Naive thymus-derived CD4-positive, alpha-beta T cell (primary cell): ENCODE measurements at regions of chr20 and their contacts with region 1.

Region 1: GRCh38 chr20:47576516-47577033 is 74.9 kb downstream of the NCOA3 start:
- DNase-seq: no peak
- ATAC-seq: peak; percentile 61
- H3K4me3 ChIP-seq: no peak overlapping the region
- H3K4me3 Mint-ChIP-seq: peak overlapping the region; percentile 8 to 58 (median 36)
- H3K27ac ChIP-seq: no peak overlapping the region
- H3K27ac Mint-ChIP-seq: peak overlapping the region in 8 of 9 donors; percentile 6 to 67 (median 30)
- H3K4me1 ChIP-seq: peaks cover 23 to 32% of the 10 kb centered on the region in 2 donors
- H3K4me1 Mint-ChIP-seq: peaks cover 67 to 95% (median 90%) of the 10 kb centered on the region in 7 donors
- H3K27me3 ChIP-seq: no peaks in the 10 kb centered on the region
- H3K27me3 Mint-ChIP-seq: no peaks in the 10 kb centered on the region

Region 2: GRCh38 chr20:47411161-47411560 is 165.4 kb before region 1 on chr20:
- CTCF ChIA-PET with region 1: no interaction called
- POLR2A ChIA-PET with region 1: no interaction called
- intact Hi-C with region 1: no loop called
- DNase-seq: no peak
- ATAC-seq: no peak
- H3K4me3 ChIP-seq: no peak overlapping the region
- H3K4me3 Mint-ChIP-seq: peak overlapping the region in 1 of 10 donors; percentile 20
- H3K27ac ChIP-seq: no peak overlapping the region
- H3K27ac Mint-ChIP-seq: no peak overlapping the region
- H3K4me1 ChIP-seq: peaks cover 13 to 15% of the 10 kb centered on the region in 2 donors
- H3K4me1 Mint-ChIP-seq: peaks cover 10 to 26% (median 25%) of the 10 kb centered on the region in 7 donors
- H3K27me3 ChIP-seq: no peaks in the 10 kb centered on the region
- H3K27me3 Mint-ChIP-seq: no peaks in the 10 kb centered on the region

Region 3: DNA sequence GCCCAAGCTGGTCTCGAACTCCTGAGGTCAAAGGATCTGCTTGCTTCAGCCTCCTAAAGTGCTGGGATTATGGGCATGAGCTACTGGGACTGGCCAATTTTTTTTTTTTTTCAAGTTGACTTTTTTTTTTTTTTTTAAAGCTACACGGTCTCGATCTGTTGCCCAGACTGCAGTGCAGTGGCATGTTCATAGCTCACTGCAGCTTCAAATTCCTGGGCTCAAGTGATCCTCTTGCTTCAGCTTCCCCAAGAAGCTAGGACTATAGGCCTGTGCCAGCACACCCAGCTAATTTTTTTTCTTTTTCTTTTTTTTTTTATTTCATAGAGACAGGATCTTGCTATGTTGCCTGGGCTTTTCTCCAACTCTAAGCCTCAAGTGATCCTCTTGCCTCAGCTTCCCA is 15.4 kb before region 1 on chr20:
- CTCF ChIA-PET with region 1: interaction called, 4 read pairs
- POLR2A ChIA-PET with region 1: no interaction called
- intact Hi-C with region 1: loop called in 1 of 2 experiments (anchors 2 kb)
- DNase-seq: no peak
- ATAC-seq: no peak
- H3K4me3 ChIP-seq: no peak overlapping the region
- H3K4me3 Mint-ChIP-seq: peak overlapping the region in 5 of 10 donors; percentile 0 to 20 (median 13)
- H3K27ac ChIP-seq: no peak overlapping the region
- H3K27ac Mint-ChIP-seq: peak overlapping the region in 1 of 9 donors; percentile 23
- H3K4me1 ChIP-seq: peaks cover 6 to 38% of the 10 kb centered on the region in 2 donors
- H3K4me1 Mint-ChIP-seq: peaks cover 58 to 87% (median 77%) of the 10 kb centered on the region in 7 donors
- H3K27me3 ChIP-seq: no peaks in the 10 kb centered on the region
- H3K27me3 Mint-ChIP-seq: no peaks in the 10 kb centered on the region

Region 4: DNA sequence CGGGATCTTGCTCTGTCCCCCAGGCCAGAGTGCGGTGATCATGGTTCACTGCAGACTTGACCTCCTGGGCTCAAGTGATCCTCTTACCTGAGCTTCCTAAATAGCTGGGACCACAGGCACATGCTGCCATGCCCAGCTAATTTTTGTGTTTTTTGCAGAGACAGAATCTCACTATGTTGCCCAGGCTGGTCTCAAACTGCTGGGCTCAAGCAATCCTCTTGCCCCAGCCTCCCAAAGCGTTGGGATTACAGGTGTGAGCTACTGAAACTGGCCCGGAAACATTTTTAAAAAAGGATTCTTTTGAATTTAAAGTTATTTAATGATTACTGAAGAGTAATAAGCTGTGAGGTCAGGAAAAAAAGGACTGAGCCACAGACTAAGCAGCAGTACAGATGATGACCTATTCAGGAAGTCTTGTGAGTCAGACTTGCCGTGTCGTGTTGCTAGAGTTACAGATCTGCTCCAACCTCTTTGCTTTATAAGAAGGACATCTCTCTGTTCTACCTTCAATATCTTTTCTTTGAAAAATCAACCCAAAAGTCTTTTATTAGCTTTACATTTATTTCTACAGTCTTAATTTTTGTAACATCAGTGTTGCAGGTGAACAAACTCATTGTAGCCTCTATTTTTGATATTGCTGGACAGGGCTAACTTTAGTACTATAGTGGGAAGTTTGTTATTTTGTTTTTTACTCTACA is 33.8 kb after region 1 on chr20:
- CTCF ChIA-PET with region 1: no interaction called
- POLR2A ChIA-PET with region 1: interaction called, 3 read pairs
- intact Hi-C with region 1: loop called in 1 of 2 experiments (anchors 5 kb)
- DNase-seq: peak in 4 of 9 donors; percentile 5 to 68 (median 32)
- ATAC-seq: peak; percentile 89
- H3K4me3 ChIP-seq: no peak overlapping the region
- H3K4me3 Mint-ChIP-seq: peak overlapping the region in 8 of 10 donors; percentile 1 to 83 (median 39)
- H3K27ac ChIP-seq: peak overlapping the region; percentile 17
- H3K27ac Mint-ChIP-seq: peak overlapping the region; percentile 65 to 96 (median 86)
- H3K4me1 ChIP-seq: peaks cover 26 to 38% of the 10 kb centered on the region in 2 donors
- H3K4me1 Mint-ChIP-seq: peaks cover 40 to 83% (median 77%) of the 10 kb centered on the region in 7 donors
- H3K27me3 ChIP-seq: no peaks in the 10 kb centered on the region
- H3K27me3 Mint-ChIP-seq: no peaks in the 10 kb centered on the region